ENCODE measurements at regions of chr1 and their contacts with region 1.

Region 1: DNA sequence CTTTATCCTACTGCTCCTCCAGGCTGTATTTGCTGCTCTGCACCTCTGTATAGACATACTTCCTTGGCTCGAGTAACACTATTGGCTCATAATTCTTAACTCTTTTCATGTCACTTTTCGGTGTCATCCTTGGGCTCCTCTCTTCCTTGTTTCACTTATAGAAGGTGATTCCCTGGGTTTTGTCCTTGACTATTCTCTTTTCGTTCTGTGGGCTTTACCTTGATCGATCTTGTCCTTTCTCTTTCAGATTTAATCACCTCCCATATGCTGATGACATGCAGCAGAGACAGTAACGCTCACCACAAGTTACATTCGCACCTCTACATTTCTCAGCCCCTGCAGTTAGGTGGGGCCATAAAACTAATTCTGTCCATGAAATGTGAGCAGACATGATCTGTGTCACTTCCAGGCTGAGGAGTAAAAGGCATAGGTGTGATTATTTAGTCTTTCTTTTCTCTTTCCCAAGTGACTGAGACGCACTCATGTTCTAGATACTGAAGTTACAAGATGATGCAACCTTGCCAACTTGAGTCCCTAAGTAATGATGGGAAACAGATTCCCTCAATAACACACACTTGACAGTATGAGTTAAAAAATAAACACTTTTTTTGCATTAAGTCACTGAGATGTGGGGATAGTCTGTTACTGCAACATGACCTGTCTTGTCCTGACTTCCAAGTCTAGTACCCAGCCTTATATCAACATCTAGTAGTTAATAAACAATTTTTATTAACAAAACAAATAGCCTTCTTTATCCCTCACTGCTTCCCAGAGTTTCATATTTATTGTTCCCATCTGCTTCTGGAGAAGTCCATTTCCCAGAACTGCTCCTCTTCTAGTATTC is 49.9 kb upstream of the HAO2 start:
- DNase-seq: peak; percentile 34
- H3K4me3 ChIP-seq: no peak overlapping the region
- H3K27ac ChIP-seq: no peak overlapping the region
- H3K4me1 ChIP-seq: no peaks in the 10 kb centered on the region
- H3K27me3 ChIP-seq: no peaks in the 10 kb centered on the region
- CTCF ChIP-seq: no peak

Region 2: DNA sequence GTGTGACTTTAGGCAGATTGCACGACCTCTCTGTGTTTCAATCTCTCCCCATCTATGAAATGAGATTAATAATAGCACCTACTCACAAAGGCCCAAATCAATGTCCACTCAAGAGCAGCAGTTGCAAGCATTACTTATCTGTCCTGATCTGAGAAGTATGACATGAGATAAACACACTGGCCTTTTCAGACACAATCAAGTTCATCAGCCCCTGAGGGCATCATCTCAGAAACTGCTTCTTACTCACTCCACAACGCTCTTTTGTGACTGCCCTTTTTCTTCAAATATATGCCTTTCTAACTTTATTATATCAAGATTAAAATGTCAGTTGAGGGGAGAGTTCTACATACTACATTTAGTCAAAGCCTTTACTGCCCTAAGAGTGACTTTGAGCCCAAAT is 761.8 kb before region 1 on chr1:
- CTCF ChIA-PET with region 1: no interaction called
- dilution Hi-C with region 1: no loop called
- in situ Hi-C with region 1: no loop called
- intact Hi-C with region 1: no loop called
- DNase-seq: no peak
- H3K4me3 ChIP-seq: no peak overlapping the region
- H3K27ac ChIP-seq: no peak overlapping the region
- H3K4me1 ChIP-seq: no peaks in the 10 kb centered on the region
- H3K27me3 ChIP-seq: peaks cover 2% of the 10 kb centered on the region
- CTCF ChIP-seq: no peak

Region 3: DNA sequence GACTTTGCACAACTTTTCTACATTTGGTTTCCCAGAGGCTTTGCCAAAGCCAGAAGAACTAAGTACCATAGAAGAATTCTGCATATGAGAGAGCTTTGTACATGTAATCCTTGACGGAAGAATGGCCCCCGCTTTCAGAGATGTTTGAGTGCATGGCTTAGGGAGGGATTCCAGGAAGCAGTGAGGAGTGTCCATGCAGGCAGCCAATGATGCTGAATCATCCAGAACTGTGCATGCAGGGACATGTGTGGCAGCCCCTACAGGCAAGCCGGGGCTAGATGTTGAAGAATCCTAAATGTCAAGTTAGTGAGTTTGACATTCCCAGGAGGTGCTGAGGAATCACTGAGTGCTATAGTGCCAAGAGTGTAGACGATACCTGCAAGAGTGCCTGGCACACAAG is 39.9 kb after region 1 on chr1:
- CTCF ChIA-PET with region 1: no interaction called
- dilution Hi-C with region 1: no loop called
- in situ Hi-C with region 1: no loop called
- intact Hi-C with region 1: loop called (anchors 5 kb)
- DNase-seq: peak; percentile 93
- H3K4me3 ChIP-seq: no peak overlapping the region
- H3K27ac ChIP-seq: peak overlapping the region; percentile 45
- H3K4me1 ChIP-seq: peaks cover 16% of the 10 kb centered on the region
- H3K27me3 ChIP-seq: no peaks in the 10 kb centered on the region
- CTCF ChIP-seq: no peak

Measured in mammary epithelial cell (primary cell).